Right ventricle myocardium inferior (tissue), 1 donor: ENCODE measurements at regions of chr17 and their contacts with region 1.

Region 1: DNA sequence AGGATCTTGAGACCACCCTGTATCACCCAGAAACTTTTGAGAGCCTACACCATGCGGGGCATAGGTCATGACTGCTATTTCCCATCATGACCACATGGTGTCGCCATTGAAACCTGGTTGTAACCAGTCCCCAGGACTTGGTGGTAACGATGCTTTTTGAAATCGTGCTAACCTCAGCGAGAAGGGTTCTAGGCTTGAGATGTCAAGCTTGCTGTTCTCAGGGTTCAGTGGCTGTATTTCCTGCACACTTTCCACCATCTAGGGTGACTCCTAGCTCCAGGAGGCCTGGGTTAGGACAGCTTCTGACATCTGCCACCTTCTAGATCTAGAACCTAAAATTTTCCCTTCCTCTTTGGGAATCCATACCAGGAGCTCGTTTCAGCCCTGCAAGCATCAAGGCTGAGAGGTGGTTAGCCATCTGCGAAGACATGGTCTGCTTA is 13.0 kb upstream of the SPNS3 start:
- DNase-seq: no peak
- ATAC-seq: peak; percentile 84

Region 2: DNA sequence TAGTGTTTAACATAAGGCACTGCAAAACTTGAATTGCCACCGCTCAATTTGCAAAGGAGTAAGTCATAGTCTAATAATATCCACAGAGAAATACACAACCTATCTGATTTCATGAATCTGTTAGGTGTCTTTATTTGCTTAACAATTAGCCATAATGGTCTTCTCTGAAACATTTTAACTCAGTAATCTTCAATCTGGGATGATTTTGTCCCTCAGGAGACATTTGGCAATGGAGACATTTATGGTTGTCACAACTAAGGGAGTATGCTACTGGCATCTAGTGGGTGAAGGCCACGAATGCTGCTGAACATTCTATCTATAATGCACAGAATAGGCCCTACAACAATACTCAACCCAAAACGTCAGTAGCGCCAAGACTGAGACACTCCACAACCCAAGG is 58.6 kb before region 1 on chr17:
- intact Hi-C with region 1: no loop called
- DNase-seq: no peak
- ATAC-seq: no peak

Region 3: GRCh38 chr17:4540224-4540641 is 119.5 kb after region 1 on chr17:
- intact Hi-C with region 1: loop called (anchors 5 kb)
- DNase-seq: no peak
- ATAC-seq: no peak

Region 4: GRCh38 chr17:4554997-4555799 is 134.5 kb after region 1 on chr17 and contains the start of gene MYBBP1A:
- intact Hi-C with region 1: loop called (anchors 5 kb)
- DNase-seq: peak; percentile 100
- ATAC-seq: peak; percentile 95
- total RNA-seq, gene MYBBP1A: 19.2 TPM